PC-9 (cell line): ENCODE measurements at regions of chr15 and their contacts with region 1.

Region 1: DNA sequence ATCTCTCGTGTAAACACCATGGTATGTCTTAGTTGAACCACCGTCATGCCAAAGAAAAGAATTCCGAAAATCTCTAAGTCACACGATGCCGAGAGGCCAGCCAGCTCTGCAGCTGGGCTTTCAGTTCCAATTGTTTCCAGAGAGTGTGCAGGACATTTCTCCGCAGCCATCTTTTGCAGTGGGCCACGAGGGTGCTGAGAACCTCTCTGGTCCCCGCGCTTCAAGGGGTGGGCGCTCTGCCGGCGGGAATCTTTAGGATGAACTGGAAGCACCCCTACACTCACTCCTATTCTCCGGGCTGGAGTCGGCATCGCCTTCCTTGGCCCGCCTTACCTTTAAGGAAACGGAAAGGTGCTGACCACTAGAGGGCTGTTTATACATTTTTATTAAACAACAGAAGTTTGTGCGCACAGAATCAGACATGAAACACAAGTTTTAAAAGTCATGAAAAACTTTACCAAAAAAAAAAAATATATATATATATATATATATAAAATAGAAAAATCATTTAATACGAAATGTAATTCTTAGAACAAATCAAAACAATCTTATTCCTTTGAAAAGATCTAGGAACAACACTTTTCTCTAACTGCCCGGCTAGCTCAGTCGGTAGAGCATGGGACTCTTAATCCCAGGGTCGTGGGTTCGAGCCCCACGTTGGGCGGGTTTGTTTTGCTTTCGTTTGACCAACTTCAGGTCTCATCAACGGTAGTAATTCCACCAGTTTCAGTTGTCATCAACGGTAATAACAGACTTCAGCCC is 12.5 kb upstream of the MORF4L1 start:
- DNase-seq: peak; percentile 75 to 76
- H3K4me3 ChIP-seq: peak overlapping the region; percentile 62
- H3K27ac ChIP-seq: peak overlapping the region; percentile 49
- H3K4me1 ChIP-seq: no peaks in the 10 kb centered on the region
- H3K27me3 ChIP-seq: no peaks in the 10 kb centered on the region
- CTCF ChIP-seq: peak; percentile 61

Region 2: GRCh38 chr15:78795670-78796069 is 64.5 kb before region 1 on chr15:
- CTCF ChIA-PET with region 1: no interaction called
- POLR2A ChIA-PET with region 1: no interaction called
- intact Hi-C with region 1: loop called (anchors 5 kb)
- DNase-seq: no peak
- H3K4me3 ChIP-seq: no peak overlapping the region
- H3K27ac ChIP-seq: no peak overlapping the region
- H3K4me1 ChIP-seq: peaks cover 14% of the 10 kb centered on the region
- H3K27me3 ChIP-seq: no peaks in the 10 kb centered on the region
- CTCF ChIP-seq: no peak